Activated CD4-positive, alpha-beta T cell treated with anti-CD3 and anti-CD28 coated beads, Interleukin-2, amount 10 ng/mL, durations not matched to agents 24 days and 14 days (primary cell): ENCODE measurements at regions of chr6 and their contacts with region 1.

Region 1: DNA sequence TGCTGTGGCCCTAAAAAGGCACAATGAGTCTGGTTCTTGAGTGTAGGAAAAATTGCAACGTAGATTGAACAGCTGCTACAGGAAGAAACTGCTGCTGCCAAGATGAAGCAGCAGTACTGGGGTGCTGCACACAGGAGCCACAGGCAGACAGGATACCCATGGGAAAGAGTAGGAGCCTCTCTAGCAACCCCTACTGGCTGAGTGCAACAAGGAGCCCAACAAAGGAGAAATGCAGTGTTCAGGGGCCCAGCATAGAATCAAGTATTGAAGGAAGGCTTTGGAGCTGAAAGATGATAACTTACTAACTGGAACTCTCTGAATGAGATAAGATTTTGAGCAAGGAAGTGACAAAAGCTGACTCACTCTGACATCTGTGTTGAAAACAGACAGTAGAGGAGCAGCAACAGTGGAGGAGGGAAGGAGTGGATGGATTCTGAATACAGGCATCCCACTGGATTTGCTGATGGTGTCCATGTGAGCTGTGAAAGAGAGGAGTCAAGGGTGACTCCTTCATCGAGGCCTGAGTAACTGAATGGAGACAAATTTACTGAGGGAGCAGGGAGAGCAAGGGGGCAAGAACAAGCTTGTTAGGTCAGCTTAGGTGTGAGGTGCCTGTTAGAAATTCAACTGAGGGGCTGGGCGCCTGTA is 534.7 kb upstream of the JARID2 start:
- DNase-seq: peak; percentile 90
- H3K4me3 Mint-ChIP-seq: peak overlapping the region; percentile 24
- H3K27ac Mint-ChIP-seq: peak overlapping the region; percentile 95
- H3K4me1 Mint-ChIP-seq: peaks cover 42% of the 10 kb centered on the region
- H3K27me3 Mint-ChIP-seq: no peaks in the 10 kb centered on the region

Region 2: GRCh38 chr6:14606353-14606752 is 104.8 kb before region 1 on chr6:
- intact Hi-C with region 1: no loop called
- DNase-seq: no peak
- H3K4me3 Mint-ChIP-seq: no peak overlapping the region
- H3K27ac Mint-ChIP-seq: no peak overlapping the region
- H3K4me1 Mint-ChIP-seq: no peaks in the 10 kb centered on the region
- H3K27me3 Mint-ChIP-seq: peaks cover 3% of the 10 kb centered on the region

Region 3: GRCh38 chr6:14638906-14639761 is 72.0 kb before region 1 on chr6:
- intact Hi-C with region 1: loop called (anchors 2 kb)
- DNase-seq: no peak
- H3K4me3 Mint-ChIP-seq: no peak overlapping the region
- H3K27ac Mint-ChIP-seq: peak overlapping the region; percentile 52
- H3K4me1 Mint-ChIP-seq: peaks cover 58% of the 10 kb centered on the region
- H3K27me3 Mint-ChIP-seq: peaks cover 4% of the 10 kb centered on the region